Activated CD4-positive, alpha-beta T cell treated with anti-CD3 and anti-CD28 coated beads for 36 hours (primary cell): ENCODE measurements at regions of chr17 and their contacts with region 1.

Region 1: GRCh38 chr17:27332485-27333409 is 38.8 kb downstream of the WSB1 start:
- DNase-seq: peak; percentile 96
- ATAC-seq: peak; percentile 90
- H3K4me3 Mint-ChIP-seq: peak overlapping the region; percentile 79
- H3K27ac Mint-ChIP-seq: peak overlapping the region; percentile 93
- H3K4me1 Mint-ChIP-seq: peaks cover 18% of the 10 kb centered on the region
- H3K27me3 Mint-ChIP-seq: no peaks in the 10 kb centered on the region

Region 2: GRCh38 chr17:27199948-27200347 is 132.8 kb before region 1 on chr17:
- CTCF ChIA-PET with region 1: interaction called, 4 read pairs
- POLR2A ChIA-PET with region 1: no interaction called
- intact Hi-C with region 1: loop called in 1 of 2 experiments (anchors 2 kb)
- DNase-seq: no peak
- ATAC-seq: no peak
- H3K4me3 Mint-ChIP-seq: no peak overlapping the region
- H3K27ac Mint-ChIP-seq: no peak overlapping the region
- H3K4me1 Mint-ChIP-seq: no peaks in the 10 kb centered on the region
- H3K27me3 Mint-ChIP-seq: peaks cover 6% of the 10 kb centered on the region

Region 3: DNA sequence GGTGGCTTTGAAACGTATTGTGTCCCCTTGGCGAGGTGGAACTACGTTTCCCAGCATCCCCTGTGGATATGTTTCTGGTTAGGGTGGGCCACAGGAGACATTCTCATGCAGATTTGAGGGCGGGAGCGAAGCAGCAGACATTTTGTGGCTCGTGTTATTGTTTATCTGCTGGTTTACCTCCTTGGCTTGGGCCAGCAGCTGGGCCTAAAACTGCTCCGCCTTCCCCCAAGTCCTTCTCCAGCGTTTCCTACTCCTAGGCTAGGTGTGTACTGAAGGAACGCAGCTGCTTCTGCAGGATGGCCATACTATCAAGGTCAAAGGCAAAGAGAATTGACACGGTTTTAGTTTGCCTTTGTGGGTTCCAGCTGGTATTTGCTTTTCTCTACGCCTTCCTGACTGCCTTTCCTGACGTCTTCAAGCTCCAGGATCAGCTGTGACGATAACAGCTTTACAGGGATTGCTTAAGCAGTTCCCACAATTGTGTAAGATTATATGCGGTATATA is 56.0 kb before region 1 on chr17:
- CTCF ChIA-PET with region 1: no interaction called
- POLR2A ChIA-PET with region 1: no interaction called
- intact Hi-C with region 1: no loop called
- DNase-seq: no peak
- ATAC-seq: no peak
- H3K4me3 Mint-ChIP-seq: no peak overlapping the region
- H3K27ac Mint-ChIP-seq: no peak overlapping the region
- H3K4me1 Mint-ChIP-seq: no peaks in the 10 kb centered on the region
- H3K27me3 Mint-ChIP-seq: no peaks in the 10 kb centered on the region

Region 4: GRCh38 chr17:27293898-27294688 is 38.7 kb before region 1 on chr17 and contains the start of gene WSB1:
- CTCF ChIA-PET with region 1: interaction called, 5 read pairs
- POLR2A ChIA-PET with region 1: interaction called, 18 read pairs
- intact Hi-C with region 1: loop called (anchors 1 kb)
- DNase-seq: peak; percentile 96
- ATAC-seq: peak; percentile 86
- H3K4me3 Mint-ChIP-seq: peak within 1 kb of the TSS; percentile 89
- H3K27ac Mint-ChIP-seq: peak within 1 kb of the TSS; percentile 99
- H3K4me1 Mint-ChIP-seq: peaks cover 32% of the 10 kb centered on the region
- H3K27me3 Mint-ChIP-seq: no peaks in the 10 kb centered on the region
- total RNA-seq, gene WSB1: 145 to 190 TPM

Region 5: DNA sequence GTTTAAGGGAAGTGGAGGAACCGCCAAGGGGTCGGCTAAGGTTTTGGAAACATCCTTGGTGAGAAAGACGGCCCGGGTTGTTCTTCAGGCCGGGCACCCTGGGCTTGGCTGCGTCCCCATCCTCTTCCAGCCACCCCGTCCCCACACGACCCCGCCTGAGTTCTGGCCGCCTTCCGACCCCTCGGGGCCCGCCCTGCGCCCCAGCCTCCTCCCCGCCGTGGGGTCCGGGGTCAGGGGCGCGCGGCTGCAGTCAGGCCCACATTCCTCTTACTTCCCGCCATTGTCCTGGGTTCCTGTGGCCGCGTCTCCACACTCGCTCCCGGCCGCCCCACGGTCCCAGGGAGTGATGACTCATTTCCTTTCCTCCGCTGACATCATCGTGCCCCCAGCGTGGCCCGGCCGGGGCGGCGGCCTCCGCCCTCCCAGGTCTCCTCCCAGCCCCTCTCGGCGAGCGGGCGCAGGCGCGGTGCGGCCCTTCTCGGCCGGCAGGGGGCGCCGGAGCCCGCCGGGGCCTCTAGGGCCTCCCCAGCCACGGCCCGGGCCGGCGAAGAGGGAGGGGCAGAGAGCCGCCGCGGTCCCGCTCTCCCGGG is 20.8 kb after region 1 on chr17:
- CTCF ChIA-PET with region 1: interaction called, 5 read pairs
- POLR2A ChIA-PET with region 1: no interaction called
- intact Hi-C with region 1: loop called in 1 of 2 experiments (anchors 1 kb)
- DNase-seq: peak; percentile 94
- ATAC-seq: peak; percentile 90
- H3K4me3 Mint-ChIP-seq: peak overlapping the region; percentile 85
- H3K27ac Mint-ChIP-seq: peak overlapping the region; percentile 95
- H3K4me1 Mint-ChIP-seq: peaks cover 25% of the 10 kb centered on the region
- H3K27me3 Mint-ChIP-seq: no peaks in the 10 kb centered on the region

Region 6: DNA sequence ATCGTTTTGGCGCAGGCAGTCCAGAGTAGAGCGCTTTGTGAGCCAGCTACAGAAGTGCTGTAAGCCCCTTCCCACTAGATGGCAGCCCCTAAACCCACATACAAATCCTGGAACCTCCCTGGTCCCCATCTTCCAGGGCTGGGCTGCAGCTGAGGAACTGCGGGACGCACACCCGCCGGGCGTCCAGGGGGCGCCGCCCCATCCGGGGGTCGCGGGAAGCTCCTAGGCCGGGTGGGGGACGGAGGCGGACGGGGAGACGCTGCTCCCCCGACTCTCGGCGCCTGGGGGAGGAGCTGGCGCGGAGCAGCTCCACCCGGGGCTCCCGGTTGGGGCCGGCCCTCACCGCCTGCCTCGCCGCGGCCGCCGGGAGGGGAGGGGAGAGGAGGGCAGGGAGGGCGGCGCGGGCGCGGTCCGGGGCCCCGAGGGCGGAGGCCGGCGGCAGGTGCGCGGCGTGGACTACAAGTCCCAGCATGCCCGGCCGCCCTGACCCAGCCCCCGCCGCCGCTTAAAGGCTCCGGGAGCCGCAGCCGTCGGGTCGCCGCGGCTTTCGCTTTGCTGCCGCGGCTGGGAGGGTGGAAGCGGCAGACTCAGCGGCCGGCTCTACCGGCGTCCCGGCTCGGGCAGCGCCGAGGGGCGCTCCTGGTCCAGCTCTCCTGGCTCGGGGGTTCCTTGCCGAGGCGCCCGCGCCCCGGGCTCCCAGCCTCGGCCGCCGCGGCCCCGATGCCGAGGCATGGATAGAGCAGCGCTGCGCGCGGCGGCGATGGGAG is 123.3 kb after region 1 on chr17 and contains the start of gene KSR1:
- CTCF ChIA-PET with region 1: interaction called, 7 read pairs
- POLR2A ChIA-PET with region 1: no interaction called
- intact Hi-C with region 1: loop called in 1 of 2 experiments (anchors 1 kb)
- DNase-seq: peak; percentile 92
- ATAC-seq: peak; percentile 93
- H3K4me3 Mint-ChIP-seq: peak within 1 kb of the TSS; percentile 88
- H3K27ac Mint-ChIP-seq: peak within 1 kb of the TSS; percentile 83
- H3K4me1 Mint-ChIP-seq: peaks cover 43% of the 10 kb centered on the region
- H3K27me3 Mint-ChIP-seq: peaks cover 6% of the 10 kb centered on the region
- total RNA-seq, gene KSR1: 96.6 to 113 TPM

Region 7: DNA sequence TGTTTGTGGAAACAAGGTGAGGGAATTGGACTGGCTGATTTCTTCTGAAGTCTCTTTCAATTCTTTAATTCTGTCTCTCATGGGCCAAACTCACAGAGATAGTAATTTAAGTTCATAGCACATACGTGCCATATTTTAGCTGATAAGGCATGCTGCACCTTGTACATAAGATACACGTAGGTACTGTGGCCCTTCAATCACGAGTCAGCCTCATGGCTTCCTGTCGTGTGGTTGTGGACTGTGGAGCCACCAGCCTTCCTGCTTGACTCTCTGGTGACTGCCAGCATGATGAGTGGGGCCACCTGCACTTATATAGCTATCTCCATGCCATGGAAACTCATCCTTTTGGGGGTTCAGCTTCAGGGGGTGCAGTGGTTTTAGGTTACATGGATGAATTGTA is 148.6 kb after region 1 on chr17:
- CTCF ChIA-PET with region 1: no interaction called
- POLR2A ChIA-PET with region 1: no interaction called
- intact Hi-C with region 1: no loop called
- DNase-seq: peak; percentile 69
- ATAC-seq: peak; percentile 85
- H3K4me3 Mint-ChIP-seq: peak overlapping the region; percentile 13
- H3K27ac Mint-ChIP-seq: peak overlapping the region; percentile 75
- H3K4me1 Mint-ChIP-seq: peaks cover 60% of the 10 kb centered on the region
- H3K27me3 Mint-ChIP-seq: no peaks in the 10 kb centered on the region